HAP-1 (cell line): ENCODE measurements at regions of chrX and their contacts with region 1.

Region 1: DNA sequence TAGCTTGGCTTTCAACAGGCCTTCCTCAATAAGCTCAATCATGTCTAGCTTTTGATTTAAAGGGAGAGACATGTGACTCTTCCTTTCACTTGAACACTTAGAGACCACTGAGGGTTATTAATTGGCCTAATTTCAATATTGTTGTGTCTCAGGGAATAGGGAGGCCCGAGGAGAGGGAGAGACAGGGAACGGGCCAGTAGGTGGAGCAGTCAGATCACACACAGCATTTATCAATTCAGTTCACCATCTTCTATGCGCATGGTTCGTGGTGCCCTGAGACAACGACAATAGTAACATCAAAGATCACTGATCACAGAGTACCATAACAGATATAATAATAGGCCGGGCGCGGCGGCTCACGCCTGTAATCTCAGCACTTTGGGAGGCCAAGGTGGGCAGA is 17.8 kb downstream of the ZNF81 start:
- DNase-seq: peak; percentile 36 to 63
- H3K4me3 ChIP-seq: no peak overlapping the region
- H3K4me1 ChIP-seq: peaks cover 5% of the 10 kb centered on the region
- H3K27me3 ChIP-seq: no peaks in the 10 kb centered on the region

Region 2: GRCh38 chrX:47776292-47777006 is 78.0 kb before region 1 on chrX:
- in situ Hi-C with region 1: no loop called
- DNase-seq: no peak
- H3K4me3 ChIP-seq: no peak overlapping the region
- H3K4me1 ChIP-seq: no peaks in the 10 kb centered on the region
- H3K27me3 ChIP-seq: no peaks in the 10 kb centered on the region

Region 3: GRCh38 chrX:48475774-48476577 is 621.5 kb after region 1 on chrX and contains the start of gene FTSJ1:
- in situ Hi-C with region 1: loop called (anchors 25 kb)
- DNase-seq: peak; percentile 92 to 95
- H3K4me3 ChIP-seq: peak within 1 kb of the TSS; percentile 97
- H3K4me1 ChIP-seq: peaks cover 19% of the 10 kb centered on the region
- H3K27me3 ChIP-seq: no peaks in the 10 kb centered on the region